Activated CD8-positive, alpha-beta T cell treated with anti-CD3 and anti-CD28 coated beads, Interleukin-2, amount 10 ng/mL, durations not matched to agents 7 days and 5 days (primary cell): ENCODE measurements at regions of chr20 and their contacts with region 1.

Region 1: GRCh38 chr20:4082406-4083097 is 67.2 kb upstream of the RNF24 start:
- DNase-seq: peak; percentile 76
- ATAC-seq: peak; percentile 82
- H3K4me3 Mint-ChIP-seq: peak overlapping the region; percentile 55
- H3K27ac Mint-ChIP-seq: peak overlapping the region; percentile 91
- H3K4me1 Mint-ChIP-seq: peaks cover 56% of the 10 kb centered on the region
- H3K27me3 Mint-ChIP-seq: no peaks in the 10 kb centered on the region

Region 2: DNA sequence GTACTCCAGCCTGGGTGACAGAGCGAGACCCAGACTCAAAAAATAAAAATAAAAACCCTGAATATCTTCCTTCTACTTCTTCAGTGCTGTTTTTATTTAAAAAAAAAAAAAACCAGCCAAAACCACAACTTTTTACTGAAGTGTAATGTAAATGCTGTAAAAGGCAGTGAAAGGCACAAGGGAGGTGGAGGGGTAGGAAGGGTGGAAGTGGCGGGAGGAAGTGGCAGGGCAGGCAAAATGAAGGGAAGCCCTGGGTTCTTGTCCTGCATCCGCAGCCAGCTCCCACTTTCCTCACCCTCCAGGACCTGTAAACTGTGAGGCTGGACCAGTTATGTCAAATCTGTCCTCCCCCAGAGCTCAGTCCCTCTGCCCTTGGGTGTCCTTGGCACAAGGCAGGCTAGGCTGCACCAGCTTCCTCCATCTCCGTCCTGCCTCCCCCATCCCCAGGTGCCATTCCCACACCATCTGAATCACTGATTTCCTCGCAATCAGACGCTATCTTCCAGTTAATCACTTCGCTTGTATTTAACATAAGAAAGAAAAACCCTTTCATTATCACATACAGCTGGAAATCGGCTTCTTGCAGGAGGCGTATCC is 207.1 kb before region 1 on chr20:
- CTCF ChIA-PET with region 1: no interaction called
- POLR2A ChIA-PET with region 1: no interaction called
- DNase-seq: no peak
- ATAC-seq: no peak
- H3K4me3 Mint-ChIP-seq: no peak overlapping the region
- H3K27ac Mint-ChIP-seq: no peak overlapping the region
- H3K4me1 Mint-ChIP-seq: peaks cover 15% of the 10 kb centered on the region
- H3K27me3 Mint-ChIP-seq: no peaks in the 10 kb centered on the region

Region 3: DNA sequence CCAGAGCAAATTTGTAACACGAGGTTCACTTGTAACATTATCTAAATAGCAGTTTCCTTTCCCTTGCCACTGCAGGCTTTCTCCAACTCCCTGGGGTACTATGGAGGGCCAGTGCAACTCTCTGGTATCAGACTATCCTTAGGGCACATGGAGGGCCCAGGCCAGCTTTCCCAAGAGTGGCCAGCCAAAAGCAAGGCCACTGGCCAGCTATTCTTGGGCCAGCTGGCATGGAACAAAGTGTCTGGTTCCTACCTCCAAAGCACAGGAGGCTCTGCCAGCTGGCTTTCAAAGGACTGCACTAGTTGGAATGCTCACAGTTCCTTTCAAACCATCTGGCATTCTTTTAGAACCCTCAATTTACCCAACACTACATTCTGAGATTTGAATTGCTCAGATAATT is 75.9 kb before region 1 on chr20:
- CTCF ChIA-PET with region 1: interaction called, 30 read pairs
- POLR2A ChIA-PET with region 1: no interaction called
- DNase-seq: no peak
- ATAC-seq: no peak
- H3K4me3 Mint-ChIP-seq: no peak overlapping the region
- H3K27ac Mint-ChIP-seq: no peak overlapping the region
- H3K4me1 Mint-ChIP-seq: peaks cover 8% of the 10 kb centered on the region
- H3K27me3 Mint-ChIP-seq: no peaks in the 10 kb centered on the region

Region 4: GRCh38 chr20:4014031-4014474 is 68.5 kb before region 1 on chr20:
- CTCF ChIA-PET with region 1: interaction called, 30 read pairs
- POLR2A ChIA-PET with region 1: interaction called, 3 read pairs
- DNase-seq: peak; percentile 60
- ATAC-seq: peak; percentile 19
- H3K4me3 Mint-ChIP-seq: peak overlapping the region; percentile 81
- H3K27ac Mint-ChIP-seq: no peak overlapping the region
- H3K4me1 Mint-ChIP-seq: peaks cover 47% of the 10 kb centered on the region
- H3K27me3 Mint-ChIP-seq: no peaks in the 10 kb centered on the region

Region 5: DNA sequence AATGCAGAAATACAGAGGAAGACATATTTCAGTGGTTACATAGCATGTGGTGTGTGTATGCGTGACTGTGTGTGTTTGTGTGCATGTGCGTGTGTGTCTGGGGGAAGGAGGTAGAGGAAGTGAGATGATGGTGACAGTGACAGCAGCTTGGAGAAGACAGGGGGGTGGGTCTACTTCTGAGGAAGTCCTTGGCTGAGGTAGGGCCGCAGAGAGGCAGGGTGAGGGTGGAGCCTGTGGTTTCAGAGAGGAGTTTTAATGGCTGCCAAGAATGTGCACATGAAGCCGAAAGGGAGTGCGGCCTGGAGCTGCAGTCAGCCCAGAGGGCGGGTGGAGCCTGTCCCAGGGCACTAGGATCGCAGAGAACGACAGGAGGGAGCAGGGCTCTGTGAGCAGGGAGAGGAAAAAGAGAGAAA is 44.5 kb before region 1 on chr20:
- CTCF ChIA-PET with region 1: interaction called, 11 read pairs
- POLR2A ChIA-PET with region 1: interaction called, 27 read pairs
- DNase-seq: peak; percentile 96
- ATAC-seq: peak; percentile 100
- H3K4me3 Mint-ChIP-seq: peak overlapping the region; percentile 83
- H3K27ac Mint-ChIP-seq: peak overlapping the region; percentile 99
- H3K4me1 Mint-ChIP-seq: peaks cover 27% of the 10 kb centered on the region
- H3K27me3 Mint-ChIP-seq: no peaks in the 10 kb centered on the region

Region 6: GRCh38 chr20:4065391-4065844 is 17.1 kb before region 1 on chr20:
- CTCF ChIA-PET with region 1: interaction called, 12 read pairs
- POLR2A ChIA-PET with region 1: interaction called, 3 read pairs
- DNase-seq: no peak
- ATAC-seq: no peak
- H3K4me3 Mint-ChIP-seq: no peak overlapping the region
- H3K27ac Mint-ChIP-seq: no peak overlapping the region
- H3K4me1 Mint-ChIP-seq: peaks cover 28% of the 10 kb centered on the region
- H3K27me3 Mint-ChIP-seq: no peaks in the 10 kb centered on the region

Region 7: GRCh38 chr20:4095639-4096038 is 13.1 kb after region 1 on chr20:
- CTCF ChIA-PET with region 1: interaction called, 18 read pairs
- POLR2A ChIA-PET with region 1: no interaction called
- DNase-seq: no peak
- ATAC-seq: no peak
- H3K4me3 Mint-ChIP-seq: no peak overlapping the region
- H3K27ac Mint-ChIP-seq: no peak overlapping the region
- H3K4me1 Mint-ChIP-seq: peaks cover 2% of the 10 kb centered on the region
- H3K27me3 Mint-ChIP-seq: peaks cover 23% of the 10 kb centered on the region

Region 8: GRCh38 chr20:4116091-4116490 is 33.5 kb after region 1 on chr20:
- CTCF ChIA-PET with region 1: no interaction called
- POLR2A ChIA-PET with region 1: no interaction called
- DNase-seq: no peak
- ATAC-seq: no peak
- H3K4me3 Mint-ChIP-seq: no peak overlapping the region
- H3K27ac Mint-ChIP-seq: no peak overlapping the region
- H3K4me1 Mint-ChIP-seq: peaks cover 23% of the 10 kb centered on the region
- H3K27me3 Mint-ChIP-seq: peaks cover 12% of the 10 kb centered on the region